Activated CD4-positive, alpha-beta T cell treated with anti-CD3 and anti-CD28 coated beads, Interleukin-2, amount 10 ng/mL, durations not matched to agents 7 days and 5 days (primary cell): ENCODE measurements at regions of chr11 and their contacts with region 1.

Region 1: DNA sequence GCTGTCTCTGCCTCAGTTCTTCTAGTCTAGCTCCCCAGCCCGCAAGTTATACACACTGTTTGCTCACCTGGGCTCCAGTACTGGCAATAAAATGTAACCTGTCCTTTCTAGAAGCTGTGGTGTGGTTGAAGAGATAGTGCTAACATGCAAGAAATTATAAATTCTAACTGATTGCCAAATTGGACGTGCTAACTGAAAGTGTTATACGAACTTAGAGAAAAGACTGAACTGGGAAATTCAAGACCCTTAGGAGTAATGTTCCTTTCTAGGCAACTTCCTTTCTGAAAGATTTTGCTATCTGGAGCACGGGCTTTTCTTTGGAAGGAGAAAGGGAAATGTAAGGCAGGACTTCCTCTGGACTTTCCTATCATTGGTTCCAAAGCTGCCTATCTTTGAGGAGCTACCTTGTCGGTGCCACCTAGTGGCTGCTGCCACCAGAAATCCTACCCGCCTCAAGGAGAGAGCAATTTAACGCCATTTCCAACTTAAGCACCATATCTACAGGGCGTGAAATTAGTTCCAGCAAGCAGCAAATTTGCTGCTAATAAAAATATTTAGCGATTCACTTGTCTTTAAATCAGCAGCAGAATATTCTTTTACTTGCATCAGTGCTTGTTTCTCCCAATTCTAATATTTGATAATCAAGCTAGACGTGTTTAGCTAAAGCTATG is 12.7 kb upstream of the TMEM218 start:
- DNase-seq: peak; percentile 47
- H3K4me3 Mint-ChIP-seq: no peak overlapping the region
- H3K27ac Mint-ChIP-seq: no peak overlapping the region
- H3K4me1 Mint-ChIP-seq: peaks cover 7% of the 10 kb centered on the region
- H3K27me3 Mint-ChIP-seq: peaks cover 27% of the 10 kb centered on the region

Region 2: GRCh38 chr11:125111343-125112207 is 12.5 kb before region 1 on chr11 and contains the start of gene TMEM218:
- CTCF ChIA-PET with region 1: interaction called, 21 read pairs
- POLR2A ChIA-PET with region 1: no interaction called
- DNase-seq: peak; percentile 98
- H3K4me3 Mint-ChIP-seq: peak within 1 kb of the TSS; percentile 98
- H3K27ac Mint-ChIP-seq: peak within 1 kb of the TSS; percentile 99
- H3K4me1 Mint-ChIP-seq: peaks cover 21% of the 10 kb centered on the region
- H3K27me3 Mint-ChIP-seq: peaks cover 3% of the 10 kb centered on the region
- total RNA-seq, gene TMEM218: 16.3 to 16.9 TPM

Region 3: DNA sequence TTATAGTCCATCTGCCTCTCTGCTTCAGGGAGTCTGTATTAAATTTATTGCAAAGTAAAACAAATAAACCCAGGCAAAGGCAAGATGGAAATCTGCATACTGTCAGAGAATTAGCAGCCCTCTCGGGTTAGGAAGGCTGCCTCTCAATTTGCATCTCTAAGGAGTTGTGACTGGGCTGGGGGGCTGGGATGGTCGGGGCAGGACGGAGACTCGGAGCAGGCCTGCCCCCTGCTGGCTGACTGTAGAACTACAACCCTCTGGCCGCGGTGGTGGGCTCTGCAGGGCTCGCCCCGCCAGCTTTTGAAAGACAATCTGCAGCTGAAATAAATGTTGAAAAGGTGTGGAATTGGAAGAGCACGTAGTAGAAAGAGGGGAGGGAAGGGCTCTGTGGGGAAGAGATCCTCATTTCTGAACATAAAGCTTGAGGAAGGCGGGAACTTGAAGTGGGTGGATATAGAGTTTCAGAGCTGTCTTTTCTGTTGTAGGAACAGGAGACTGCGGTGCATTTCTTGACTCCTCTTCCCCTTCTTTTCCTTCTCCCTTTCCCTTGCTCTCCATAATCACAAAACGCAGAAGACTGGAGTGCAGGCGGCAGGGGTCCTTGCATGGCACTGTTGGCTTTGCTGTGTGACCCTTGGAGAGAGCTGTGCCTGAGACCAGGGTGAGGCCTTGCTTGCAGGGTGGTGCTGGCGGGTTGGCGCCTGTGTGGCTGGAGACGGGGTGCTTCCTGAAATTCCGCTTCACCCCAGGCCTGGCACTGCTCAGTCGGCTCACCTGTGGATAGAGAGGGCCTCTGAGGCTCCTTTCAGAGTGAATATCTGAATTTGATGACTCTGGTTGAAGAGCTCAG is 17.8 kb after region 1 on chr11:
- CTCF ChIA-PET with region 1: interaction called, 13 read pairs
- POLR2A ChIA-PET with region 1: no interaction called
- DNase-seq: peak; percentile 54
- H3K4me3 Mint-ChIP-seq: no peak overlapping the region
- H3K27ac Mint-ChIP-seq: no peak overlapping the region
- H3K4me1 Mint-ChIP-seq: no peaks in the 10 kb centered on the region
- H3K27me3 Mint-ChIP-seq: peaks cover 22% of the 10 kb centered on the region